ENCODE measurements at regions of chr6 and their contacts with region 1.

Region 1: DNA sequence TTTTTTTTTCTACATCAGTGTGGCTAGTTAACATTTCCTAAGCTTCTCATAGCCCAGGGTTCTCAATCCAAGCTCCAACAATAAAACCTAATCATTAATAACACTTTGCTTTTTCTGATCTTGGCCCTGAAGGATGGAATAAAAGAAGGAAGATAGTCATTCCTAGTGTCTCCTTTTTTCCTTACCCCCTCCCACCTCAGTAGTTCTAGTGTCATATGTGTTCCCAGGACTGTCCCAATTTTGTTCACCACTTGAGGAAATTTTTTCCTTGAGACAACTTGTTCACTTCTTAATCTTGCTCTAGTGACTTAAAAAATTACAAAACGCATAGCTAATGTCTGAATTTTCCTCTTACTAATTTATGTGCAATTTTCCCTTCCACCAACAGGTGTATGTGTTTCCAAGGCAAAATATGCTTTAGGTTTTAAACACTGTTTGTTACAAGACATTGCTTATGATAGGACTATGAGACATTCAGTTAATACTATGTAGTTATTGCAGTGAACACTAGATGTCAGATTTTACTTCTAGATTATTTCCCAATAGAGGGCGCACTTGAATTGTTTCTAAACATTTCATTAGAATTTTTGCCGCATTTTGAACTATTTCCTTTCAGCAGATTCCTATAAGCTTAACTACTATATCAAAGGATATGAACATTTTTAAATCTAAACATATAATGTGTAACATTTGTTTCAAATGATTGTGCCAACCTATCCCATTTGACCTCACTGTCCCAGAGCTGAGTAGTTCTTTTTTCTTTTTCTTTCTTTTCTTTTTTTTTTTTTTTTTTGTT is 18.5 kb upstream of the C6orf141 start:
- DNase-seq: no peak
- H3K4me3 Mint-ChIP-seq: no peak overlapping the region
- H3K27ac Mint-ChIP-seq: no peak overlapping the region
- H3K4me1 Mint-ChIP-seq: peaks cover 2% of the 10 kb centered on the region
- H3K27me3 Mint-ChIP-seq: peaks cover 20% of the 10 kb centered on the region

Region 2: DNA sequence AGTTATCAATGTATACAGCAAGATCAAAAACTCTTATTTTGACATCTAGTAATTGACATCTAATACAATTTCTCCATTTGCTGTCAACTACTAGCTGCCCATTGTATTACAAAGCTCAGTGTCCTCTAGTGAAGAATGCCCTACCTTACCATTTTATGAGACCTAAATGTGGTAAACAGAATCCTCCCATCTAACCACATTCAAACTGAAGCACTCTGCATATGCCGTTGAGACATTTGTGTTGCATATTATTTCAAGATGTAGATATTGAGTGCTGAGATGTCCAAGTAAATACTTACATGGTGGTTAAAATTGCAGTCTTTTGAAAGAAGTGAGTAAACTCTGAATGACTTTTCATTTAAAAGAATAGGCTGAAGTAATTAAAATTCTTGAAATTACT is 32.8 kb before region 1 on chr6:
- CTCF ChIA-PET with region 1: no interaction called
- POLR2A ChIA-PET with region 1: no interaction called
- DNase-seq: no peak
- H3K4me3 Mint-ChIP-seq: no peak overlapping the region
- H3K27ac Mint-ChIP-seq: no peak overlapping the region
- H3K4me1 Mint-ChIP-seq: no peaks in the 10 kb centered on the region
- H3K27me3 Mint-ChIP-seq: peaks cover 4% of the 10 kb centered on the region

Region 3: GRCh38 chr6:49550492-49551077 is 18.6 kb after region 1 on chr6 and contains the start of gene C6orf141:
- CTCF ChIA-PET with region 1: interaction called, 18 read pairs
- POLR2A ChIA-PET with region 1: interaction called, 3 read pairs
- DNase-seq: peak; percentile 39
- H3K4me3 Mint-ChIP-seq: peak within 1 kb of the TSS; percentile 58
- H3K27ac Mint-ChIP-seq: no peak within 1 kb of the TSS
- H3K4me1 Mint-ChIP-seq: peaks cover 17% of the 10 kb centered on the region
- H3K27me3 Mint-ChIP-seq: peaks cover 39% of the 10 kb centered on the region
- total RNA-seq, gene C6orf141: 0.48 TPM in 1 of 2 experiments, not detected in the other

Region 4: GRCh38 chr6:49606696-49607390 is 74.9 kb after region 1 on chr6:
- CTCF ChIA-PET with region 1: interaction called, 23 read pairs
- POLR2A ChIA-PET with region 1: no interaction called
- DNase-seq: peak; percentile 17
- H3K4me3 Mint-ChIP-seq: no peak overlapping the region
- H3K27ac Mint-ChIP-seq: no peak overlapping the region
- H3K4me1 Mint-ChIP-seq: no peaks in the 10 kb centered on the region
- H3K27me3 Mint-ChIP-seq: peaks cover 4% of the 10 kb centered on the region

Region 5: DNA sequence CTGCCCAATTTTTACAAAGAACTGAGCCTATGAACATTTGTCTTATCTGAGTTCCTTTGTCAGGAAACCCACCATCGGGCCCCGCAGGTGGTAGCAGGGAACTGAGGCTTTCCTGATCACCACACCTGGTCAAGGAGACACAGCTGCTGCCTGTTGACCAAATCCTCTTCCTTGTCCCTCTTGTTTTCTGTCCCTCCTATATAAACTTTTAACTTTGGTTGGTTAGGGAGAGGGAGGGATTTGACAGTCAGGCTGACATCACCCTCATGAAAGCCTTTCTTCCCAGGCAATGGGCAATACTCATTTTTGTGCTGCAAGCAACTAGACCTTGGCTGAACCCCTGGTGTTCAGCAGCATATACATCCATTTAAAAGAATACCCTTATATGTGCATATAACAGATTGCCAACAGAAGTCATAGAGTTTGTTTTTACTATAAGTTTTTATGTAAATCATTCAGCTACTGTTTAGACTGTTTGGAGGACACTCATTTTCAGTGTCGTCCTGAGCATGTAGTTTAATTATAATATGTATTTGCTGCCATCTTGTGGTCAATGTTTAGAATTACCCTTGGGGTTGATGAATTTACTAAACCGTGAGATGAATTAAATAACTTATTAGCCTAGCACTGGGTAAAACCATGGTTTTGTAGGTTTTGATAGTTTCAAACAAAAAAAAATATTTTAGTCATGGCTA is 317.4 kb after region 1 on chr6:
- CTCF ChIA-PET with region 1: interaction called, 13 read pairs
- POLR2A ChIA-PET with region 1: no interaction called
- DNase-seq: no peak
- H3K4me3 Mint-ChIP-seq: no peak overlapping the region
- H3K27ac Mint-ChIP-seq: no peak overlapping the region
- H3K4me1 Mint-ChIP-seq: no peaks in the 10 kb centered on the region
- H3K27me3 Mint-ChIP-seq: peaks cover 1% of the 10 kb centered on the region

Measured in activated CD4-positive, alpha-beta memory T cell treated with anti-CD3 and anti-CD28 coated beads, Interleukin-2, amount 10 ng/mL, durations not matched to agents 7 days and 5 days (primary cell).